Cardiac septum (tissue), 1 donor: ENCODE measurements at regions of chr4 and their contacts with region 1.

Region 1: GRCh38 chr4:168831919-168832762 is 177.9 kb downstream of the CBR4 start:
- DNase-seq: peak; percentile 86

Region 2: GRCh38 chr4:168585168-168586091 is 246.7 kb before region 1 on chr4:
- intact Hi-C with region 1: no loop called
- DNase-seq: peak; percentile 87

Region 3: DNA sequence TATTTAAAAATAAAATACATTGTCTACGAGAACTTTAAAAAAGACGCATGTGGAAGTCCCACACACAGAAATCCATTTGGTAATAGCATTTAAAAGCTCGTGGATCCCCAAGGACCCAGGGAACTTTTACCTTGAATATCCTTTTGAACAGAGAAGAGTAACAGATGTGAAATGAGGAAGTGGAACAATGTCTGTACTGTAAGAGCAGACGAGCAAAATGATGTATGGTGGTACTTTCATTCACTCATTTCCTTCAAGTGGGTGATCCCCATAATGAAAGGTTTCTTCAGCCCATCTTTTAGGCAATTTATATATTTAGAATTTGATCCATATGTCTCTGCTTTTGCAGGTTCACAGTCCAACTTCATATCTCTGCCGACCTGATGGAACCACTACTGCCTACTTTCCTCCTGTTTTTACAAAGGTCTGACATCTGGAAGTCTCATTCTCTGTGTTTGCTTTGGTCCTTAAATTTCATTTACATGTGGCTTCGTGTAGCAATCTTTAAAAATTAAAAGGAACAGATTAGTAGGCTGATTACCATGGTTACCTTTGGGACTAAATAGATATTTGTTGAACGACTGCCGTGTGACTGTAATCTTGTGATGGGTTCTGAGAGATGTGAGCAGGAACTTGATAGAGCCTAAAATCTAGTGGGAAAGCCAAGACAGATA is 146.9 kb before region 1 on chr4:
- intact Hi-C with region 1: no loop called
- DNase-seq: no peak

Region 4: GRCh38 chr4:168815379-168816345 is 16.5 kb before region 1 on chr4:
- intact Hi-C with region 1: loop called (anchors 1 kb)
- DNase-seq: no peak

Region 5: DNA sequence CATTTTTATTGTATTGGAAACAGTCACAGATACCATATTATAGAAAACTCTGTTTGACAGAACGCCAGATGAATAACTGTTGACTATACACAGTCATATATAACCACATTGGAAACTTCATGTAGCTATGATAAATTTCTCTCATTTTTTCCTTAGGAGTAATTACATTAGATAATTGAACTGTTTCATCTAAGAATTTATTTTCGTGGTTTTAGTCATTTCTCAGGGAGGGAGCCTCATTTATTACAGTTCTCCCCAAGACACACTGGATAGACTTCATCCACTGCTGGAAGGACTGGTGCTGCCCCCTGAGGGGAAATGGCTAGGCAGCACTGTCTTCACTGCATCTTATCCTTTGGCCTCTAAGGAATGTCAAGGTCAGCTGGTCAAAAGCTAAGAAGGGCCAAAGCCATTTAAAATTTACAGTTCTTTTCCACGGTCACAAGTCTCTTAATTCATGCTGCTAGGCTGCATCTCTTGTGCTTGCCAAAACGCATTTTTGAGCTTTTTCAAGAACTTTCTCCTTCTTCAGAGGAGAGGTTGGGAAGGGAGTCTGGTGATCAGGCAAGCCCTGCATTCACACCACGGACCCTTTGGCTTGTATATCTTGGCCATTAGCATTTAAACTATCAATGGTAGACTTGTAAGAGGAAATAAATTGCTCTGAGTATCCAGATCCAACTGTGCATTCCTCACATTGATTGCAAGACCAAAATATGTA is 32.8 kb after region 1 on chr4:
- intact Hi-C with region 1: loop called (anchors 5 kb)
- DNase-seq: no peak